Activated CD4-positive, alpha-beta T cell treated with anti-CD3 and anti-CD28 coated beads for 36 hours (primary cell): ENCODE measurements at regions of chr19 and their contacts with region 1.

Region 1: GRCh38 chr19:19554074-19555023 is 16.3 kb downstream of the CILP2 start:
- DNase-seq: peak; percentile 82
- ATAC-seq: peak; percentile 78
- H3K4me3 Mint-ChIP-seq: no peak overlapping the region
- H3K27ac Mint-ChIP-seq: no peak overlapping the region
- H3K4me1 Mint-ChIP-seq: peaks cover 7% of the 10 kb centered on the region
- H3K27me3 Mint-ChIP-seq: no peaks in the 10 kb centered on the region

Region 2: DNA sequence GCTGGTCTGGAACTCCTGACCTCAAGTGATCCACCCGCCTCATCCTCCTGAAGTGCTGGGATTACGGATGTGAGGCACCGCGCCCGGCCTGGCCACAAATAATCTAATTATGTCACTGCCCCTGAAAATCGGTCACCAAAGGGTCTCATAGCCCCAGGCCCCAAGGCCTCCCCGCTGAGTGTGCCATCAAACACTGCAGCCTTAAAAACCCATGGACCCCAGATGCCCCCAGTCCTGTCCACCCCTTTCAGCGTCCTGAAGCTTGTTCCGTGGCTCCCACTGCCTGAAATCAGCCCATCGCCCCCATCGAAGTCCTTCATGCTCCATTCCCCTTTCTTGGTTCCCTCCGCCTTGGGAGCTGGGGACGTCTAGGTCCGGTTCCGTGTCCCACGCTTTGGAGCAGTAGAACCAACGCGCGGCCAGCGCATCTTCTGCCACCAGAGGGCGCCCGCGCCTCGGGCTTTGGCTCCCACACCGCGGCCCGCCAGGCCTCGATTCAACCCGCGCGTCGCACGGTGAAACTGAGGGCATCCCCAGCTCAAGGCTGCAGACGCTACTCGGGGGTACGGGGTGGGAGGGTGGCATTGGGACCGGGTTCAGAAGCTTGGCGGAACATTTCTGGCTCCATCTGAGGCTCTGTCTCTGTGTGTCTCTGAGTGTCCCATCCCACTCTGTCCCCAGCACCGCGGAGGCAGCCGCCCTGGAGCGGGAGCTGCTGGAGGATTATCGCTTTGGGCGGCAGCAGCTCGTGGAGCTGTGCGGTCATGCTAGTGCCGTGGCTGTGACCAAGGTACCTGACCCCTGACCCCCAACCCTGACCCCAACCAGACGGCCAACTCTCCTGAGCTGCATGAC is 22.2 kb before region 1 on chr19:
- CTCF ChIA-PET with region 1: interaction called, 48 read pairs
- POLR2A ChIA-PET with region 1: no interaction called
- intact Hi-C with region 1: loop called in 1 of 2 experiments (anchors 1 kb)
- DNase-seq: peak; percentile 92
- ATAC-seq: peak; percentile 87
- H3K4me3 Mint-ChIP-seq: no peak overlapping the region
- H3K27ac Mint-ChIP-seq: no peak overlapping the region
- H3K4me1 Mint-ChIP-seq: peaks cover 10% of the 10 kb centered on the region
- H3K27me3 Mint-ChIP-seq: no peaks in the 10 kb centered on the region

Region 3: GRCh38 chr19:19575411-19575810 is 21.1 kb after region 1 on chr19:
- CTCF ChIA-PET with region 1: interaction called, 13 read pairs
- POLR2A ChIA-PET with region 1: no interaction called
- intact Hi-C with region 1: no loop called
- DNase-seq: no peak
- ATAC-seq: no peak
- H3K4me3 Mint-ChIP-seq: no peak overlapping the region
- H3K27ac Mint-ChIP-seq: no peak overlapping the region
- H3K4me1 Mint-ChIP-seq: peaks cover 2% of the 10 kb centered on the region
- H3K27me3 Mint-ChIP-seq: no peaks in the 10 kb centered on the region

Region 4: DNA sequence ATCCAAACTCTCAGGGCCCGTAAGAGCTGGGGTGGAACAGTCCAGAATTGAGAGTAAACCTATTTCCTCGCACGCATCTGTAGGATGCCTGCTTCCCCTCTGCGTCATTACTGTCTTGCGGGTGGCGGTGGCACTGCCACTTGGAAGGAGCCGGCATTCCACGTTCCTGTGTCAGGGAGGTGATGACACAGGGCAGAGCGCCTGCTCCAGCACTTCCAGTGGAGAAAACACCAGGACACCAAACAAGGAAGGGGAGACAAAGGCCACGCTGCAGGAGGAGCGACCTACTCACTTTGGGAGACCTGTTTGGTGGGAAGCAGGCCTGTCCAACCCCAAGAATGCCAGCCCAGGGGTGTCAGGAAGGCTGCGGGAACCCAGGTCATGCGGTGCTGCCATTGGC is 27.0 kb after region 1 on chr19:
- CTCF ChIA-PET with region 1: interaction called, 14 read pairs
- POLR2A ChIA-PET with region 1: no interaction called
- intact Hi-C with region 1: no loop called
- DNase-seq: no peak
- ATAC-seq: no peak
- H3K4me3 Mint-ChIP-seq: no peak overlapping the region
- H3K27ac Mint-ChIP-seq: no peak overlapping the region
- H3K4me1 Mint-ChIP-seq: peaks cover 10% of the 10 kb centered on the region
- H3K27me3 Mint-ChIP-seq: no peaks in the 10 kb centered on the region

Region 5: GRCh38 chr19:19591133-19591825 is 36.9 kb after region 1 on chr19:
- CTCF ChIA-PET with region 1: interaction called, 13 read pairs
- POLR2A ChIA-PET with region 1: no interaction called
- intact Hi-C with region 1: no loop called
- DNase-seq: peak; percentile 85
- ATAC-seq: peak; percentile 91
- H3K4me3 Mint-ChIP-seq: peak overlapping the region; percentile 27
- H3K27ac Mint-ChIP-seq: peak overlapping the region; percentile 82
- H3K4me1 Mint-ChIP-seq: peaks cover 66% of the 10 kb centered on the region
- H3K27me3 Mint-ChIP-seq: no peaks in the 10 kb centered on the region

Region 6: DNA sequence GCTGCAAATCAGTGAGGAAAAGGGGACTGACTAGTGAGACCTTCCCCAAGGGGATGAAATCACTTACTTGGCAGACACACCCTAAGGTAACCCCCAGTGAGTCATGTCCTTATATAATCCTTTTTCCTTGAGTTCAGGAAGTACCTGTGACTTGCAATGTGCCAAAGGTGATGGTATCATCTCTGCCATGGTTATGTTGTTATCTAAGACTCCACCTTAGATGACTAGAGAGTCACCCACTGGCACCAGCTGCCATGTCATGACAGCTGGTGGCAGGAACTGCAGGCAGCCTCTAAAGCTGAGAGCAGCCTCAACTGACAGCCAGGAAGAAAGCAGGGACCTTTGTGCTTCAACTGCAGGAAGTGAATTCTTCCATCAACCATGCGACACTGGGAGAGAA is 51.7 kb after region 1 on chr19:
- CTCF ChIA-PET with region 1: interaction called, 11 read pairs
- POLR2A ChIA-PET with region 1: interaction called, 3 read pairs
- intact Hi-C with region 1: no loop called
- DNase-seq: peak; percentile 68
- ATAC-seq: peak; percentile 83
- H3K4me3 Mint-ChIP-seq: peak overlapping the region; percentile 11
- H3K27ac Mint-ChIP-seq: peak overlapping the region; percentile 74
- H3K4me1 Mint-ChIP-seq: peaks cover 62% of the 10 kb centered on the region
- H3K27me3 Mint-ChIP-seq: no peaks in the 10 kb centered on the region